ENCODE measurements at regions of chr22 and their contacts with region 1.

Region 1: DNA sequence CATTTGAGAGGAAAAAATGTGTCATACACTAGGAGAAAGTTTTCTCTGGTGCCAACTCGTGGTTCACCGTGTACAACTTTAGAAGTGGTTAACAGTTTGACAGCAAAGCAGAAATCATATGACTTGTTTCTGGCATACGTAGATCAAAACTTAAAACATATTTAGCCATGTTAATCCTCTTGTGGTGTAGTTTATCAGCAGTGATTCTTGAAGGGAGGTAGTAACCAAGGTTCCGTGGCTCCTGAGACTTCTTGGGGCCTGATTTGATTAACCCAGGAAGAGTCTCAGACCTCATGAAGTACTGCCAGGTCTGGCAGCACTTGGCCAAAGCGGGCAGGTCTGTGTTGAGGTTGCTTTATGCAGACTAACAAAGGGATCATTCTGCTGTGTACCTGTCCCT is 40.5 kb downstream of the SREBF2 start:
- DNase-seq: peak in 7 of 9 donors; percentile 36 to 69 (median 60)
- ATAC-seq: peak; percentile 86
- H3K4me3 ChIP-seq: no peak overlapping the region
- H3K4me3 Mint-ChIP-seq: peak overlapping the region in 8 of 10 donors; percentile 10 to 68 (median 38)
- H3K27ac ChIP-seq: peak overlapping the region; percentile 54
- H3K27ac Mint-ChIP-seq: peak overlapping the region; percentile 82 to 96 (median 88)
- H3K4me1 ChIP-seq: no peaks in the 10 kb centered on the region
- H3K4me1 Mint-ChIP-seq: peaks cover 0 to 29% (median 18%) of the 10 kb centered on the region in 7 donors
- H3K27me3 ChIP-seq: no peaks in the 10 kb centered on the region
- H3K27me3 Mint-ChIP-seq: no peaks in the 10 kb centered on the region

Region 2: GRCh38 chr22:41908411-41909309 is 35.3 kb after region 1 on chr22:
- CTCF ChIA-PET with region 1: no interaction called
- POLR2A ChIA-PET with region 1: no interaction called
- intact Hi-C with region 1: loop called (anchors 1 to 5 kb)
- DNase-seq: peak in 1 of 9 donors; percentile 26
- ATAC-seq: peak; percentile 25
- H3K4me3 ChIP-seq: no peak overlapping the region
- H3K4me3 Mint-ChIP-seq: peak overlapping the region; percentile 41 to 83 (median 68)
- H3K27ac ChIP-seq: no peak overlapping the region
- H3K27ac Mint-ChIP-seq: peak overlapping the region in 7 of 9 donors; percentile 4 to 74 (median 58)
- H3K4me1 ChIP-seq: peaks cover 14 to 19% of the 10 kb centered on the region in 2 donors
- H3K4me1 Mint-ChIP-seq: peaks cover 4 to 27% (median 25%) of the 10 kb centered on the region in 7 donors
- H3K27me3 ChIP-seq: peaks cover 7 to 17% of the 10 kb centered on the region in 2 donors
- H3K27me3 Mint-ChIP-seq: peaks cover 25 to 39% (median 26%) of the 10 kb centered on the region in 5 donors

Region 3: DNA sequence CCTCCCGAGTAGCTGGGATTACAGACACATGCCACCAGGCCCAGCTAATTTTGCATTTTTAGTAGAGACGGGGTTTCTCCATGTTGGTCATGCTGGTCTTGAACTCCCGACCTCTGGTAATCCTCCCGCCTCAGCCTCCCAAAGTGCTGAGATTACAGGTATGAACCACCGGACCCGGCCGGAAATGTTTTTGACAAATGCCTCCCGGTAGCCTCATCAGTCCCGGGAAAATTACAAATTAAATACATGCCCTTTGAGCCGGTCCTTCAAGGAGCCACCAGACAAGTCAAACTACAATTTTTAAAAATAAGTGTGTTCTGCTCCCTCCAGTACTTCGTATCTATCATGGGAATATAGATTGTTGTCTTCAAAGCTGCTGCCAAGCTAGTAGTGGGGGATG is 142.7 kb after region 1 on chr22:
- CTCF ChIA-PET with region 1: no interaction called
- POLR2A ChIA-PET with region 1: no interaction called
- intact Hi-C with region 1: no loop called
- DNase-seq: no peak
- ATAC-seq: no peak
- H3K4me3 ChIP-seq: no peak overlapping the region
- H3K4me3 Mint-ChIP-seq: no peak overlapping the region
- H3K27ac ChIP-seq: no peak overlapping the region
- H3K27ac Mint-ChIP-seq: no peak overlapping the region
- H3K4me1 ChIP-seq: no peaks in the 10 kb centered on the region
- H3K4me1 Mint-ChIP-seq: peaks cover 0 to 4% (median 0%) of the 10 kb centered on the region in 7 donors
- H3K27me3 ChIP-seq: no peaks in the 10 kb centered on the region
- H3K27me3 Mint-ChIP-seq: peaks cover 6 to 25% (median 16%) of the 10 kb centered on the region in 5 donors

Measured in naive thymus-derived CD4-positive, alpha-beta T cell (primary cell).